Naive thymus-derived CD4-positive, alpha-beta T cell (primary cell): ENCODE measurements at regions of chr12 and their contacts with region 1.

Region 1: GRCh38 chr12:104286538-104287482 is 16.7 kb upstream of the EID3 start:
- DNase-seq: peak; percentile 72 to 90 (median 87)
- ATAC-seq: peak; percentile 93
- H3K4me3 ChIP-seq: peak overlapping the region; percentile 73
- H3K4me3 Mint-ChIP-seq: peak overlapping the region; percentile 86 to 100 (median 98)
- H3K27ac ChIP-seq: peak overlapping the region; percentile 66
- H3K27ac Mint-ChIP-seq: peak overlapping the region; percentile 85 to 99 (median 94)
- H3K4me1 ChIP-seq: peaks cover 18 to 19% of the 10 kb centered on the region in 2 donors
- H3K4me1 Mint-ChIP-seq: peaks cover 14 to 40% (median 34%) of the 10 kb centered on the region in 7 donors
- H3K27me3 ChIP-seq: no peaks in the 10 kb centered on the region
- H3K27me3 Mint-ChIP-seq: peaks cover 0 to 1% (median 0%) of the 10 kb centered on the region in 5 donors

Region 2: GRCh38 chr12:103956516-103957027 is 330.2 kb before region 1 on chr12:
- CTCF ChIA-PET with region 1: no interaction called
- POLR2A ChIA-PET with region 1: interaction called, 4 read pairs
- intact Hi-C with region 1: loop called in 1 of 2 experiments (anchors 1 kb)
- DNase-seq: peak in 3 of 9 donors; percentile 4 to 7 (median 5)
- ATAC-seq: no peak
- H3K4me3 ChIP-seq: peak overlapping the region; percentile 91
- H3K4me3 Mint-ChIP-seq: peak overlapping the region; percentile 95 to 100 (median 99)
- H3K27ac ChIP-seq: peak overlapping the region; percentile 73
- H3K27ac Mint-ChIP-seq: peak overlapping the region; percentile 93 to 99 (median 98)
- H3K4me1 ChIP-seq: peaks cover 13 to 17% of the 10 kb centered on the region in 2 donors
- H3K4me1 Mint-ChIP-seq: peaks cover 25 to 58% (median 43%) of the 10 kb centered on the region in 7 donors
- H3K27me3 ChIP-seq: no peaks in the 10 kb centered on the region
- H3K27me3 Mint-ChIP-seq: no peaks in the 10 kb centered on the region

Region 3: GRCh38 chr12:104137913-104138796 is 148.7 kb before region 1 on chr12 and contains the start of gene NFYB:
- CTCF ChIA-PET with region 1: interaction called, 5 read pairs
- POLR2A ChIA-PET with region 1: interaction called, 7 read pairs
- intact Hi-C with region 1: loop called (anchors 1 to 2 kb)
- DNase-seq: peak; percentile 90 to 96 (median 94)
- ATAC-seq: peak; percentile 97
- H3K4me3 ChIP-seq: peak within 1 kb of the TSS; percentile 69
- H3K4me3 Mint-ChIP-seq: peak within 1 kb of the TSS; percentile 81 to 93 (median 90)
- H3K27ac ChIP-seq: peak within 1 kb of the TSS; percentile 72
- H3K27ac Mint-ChIP-seq: peak within 1 kb of the TSS; percentile 71 to 95 (median 89)
- H3K4me1 ChIP-seq: peaks cover 10 to 23% of the 10 kb centered on the region in 2 donors
- H3K4me1 Mint-ChIP-seq: peaks cover 0 to 22% (median 9%) of the 10 kb centered on the region in 7 donors
- H3K27me3 ChIP-seq: no peaks in the 10 kb centered on the region
- H3K27me3 Mint-ChIP-seq: peaks cover 0 to 24% (median 0%) of the 10 kb centered on the region in 5 donors
- total RNA-seq, gene NFYB: 11.6 to 25.9 (median 24.4) TPM

Region 4: DNA sequence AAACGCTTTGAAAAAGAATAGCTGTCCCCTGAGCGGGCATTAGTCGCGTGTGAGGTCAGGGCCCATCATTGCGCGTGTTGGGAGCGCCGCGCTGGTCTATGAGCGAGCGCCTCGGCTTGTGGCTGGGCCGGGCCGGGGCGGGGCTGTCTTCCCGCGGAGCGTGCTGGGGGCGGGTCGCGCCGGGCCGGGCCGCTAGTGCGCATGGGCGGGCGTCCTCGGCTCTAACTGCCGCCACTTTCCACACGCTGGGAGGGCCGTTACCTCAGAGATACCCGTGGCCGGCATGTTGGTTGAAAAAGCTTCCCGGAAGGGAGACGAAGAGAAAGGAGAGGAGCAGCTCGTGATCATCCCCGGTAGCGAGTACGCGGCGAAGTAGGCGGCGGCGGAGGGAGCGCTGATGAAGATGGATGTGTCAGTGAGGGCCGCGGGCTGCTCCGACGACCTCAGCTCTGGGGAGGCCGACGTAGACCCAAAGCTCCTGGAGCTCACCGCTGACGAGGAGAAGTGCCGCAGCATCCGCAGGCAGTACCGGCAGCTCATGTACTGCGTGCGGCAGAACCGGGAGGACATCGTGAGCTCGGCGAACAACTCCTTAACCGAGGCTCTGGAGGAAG is 16.8 kb after region 1 on chr12 and contains the start of gene EID3:
- CTCF ChIA-PET with region 1: interaction called, 14 read pairs
- POLR2A ChIA-PET with region 1: interaction called, 66 read pairs
- intact Hi-C with region 1: loop called (anchors 1 kb)
- DNase-seq: peak; percentile 86 to 96 (median 91)
- ATAC-seq: peak; percentile 99
- H3K4me3 ChIP-seq: peak within 1 kb of the TSS; percentile 56
- H3K4me3 Mint-ChIP-seq: peak within 1 kb of the TSS; percentile 87 to 99 (median 96)
- H3K27ac ChIP-seq: peak within 1 kb of the TSS; percentile 84
- H3K27ac Mint-ChIP-seq: peak within 1 kb of the TSS; percentile 91 to 99 (median 97)
- H3K4me1 ChIP-seq: peaks cover 7 to 24% of the 10 kb centered on the region in 2 donors
- H3K4me1 Mint-ChIP-seq: peaks cover 35 to 72% (median 56%) of the 10 kb centered on the region in 7 donors
- H3K27me3 ChIP-seq: no peaks in the 10 kb centered on the region
- H3K27me3 Mint-ChIP-seq: no peaks in the 10 kb centered on the region
- total RNA-seq, gene EID3: 8.2 to 11.8 (median 10.4) TPM

Region 5: GRCh38 chr12:104358347-104359003 is 71.7 kb after region 1 on chr12:
- CTCF ChIA-PET with region 1: no interaction called
- POLR2A ChIA-PET with region 1: interaction called, 3 read pairs
- intact Hi-C with region 1: loop called (anchors 1 to 5 kb)
- DNase-seq: peak; percentile 33 to 73 (median 63)
- ATAC-seq: peak; percentile 97
- H3K4me3 ChIP-seq: no peak overlapping the region
- H3K4me3 Mint-ChIP-seq: no peak overlapping the region
- H3K27ac ChIP-seq: no peak overlapping the region
- H3K27ac Mint-ChIP-seq: no peak overlapping the region
- H3K4me1 ChIP-seq: no peaks in the 10 kb centered on the region
- H3K4me1 Mint-ChIP-seq: peaks cover 0 to 13% (median 0%) of the 10 kb centered on the region in 7 donors
- H3K27me3 ChIP-seq: no peaks in the 10 kb centered on the region
- H3K27me3 Mint-ChIP-seq: no peaks in the 10 kb centered on the region

Region 6: GRCh38 chr12:104958009-104958945 is 671.5 kb after region 1 on chr12 and contains the start of gene SLC41A2:
- CTCF ChIA-PET with region 1: no interaction called
- POLR2A ChIA-PET with region 1: no interaction called
- intact Hi-C with region 1: loop called (anchors 5 kb)
- DNase-seq: peak; percentile 55 to 87 (median 74)
- ATAC-seq: peak; percentile 93
- H3K4me3 ChIP-seq: peak within 1 kb of the TSS; percentile 77
- H3K4me3 Mint-ChIP-seq: peak within 1 kb of the TSS; percentile 91 to 98 (median 96)
- H3K27ac ChIP-seq: peak within 1 kb of the TSS; percentile 59
- H3K27ac Mint-ChIP-seq: peak within 1 kb of the TSS; percentile 65 to 93 (median 89)
- H3K4me1 ChIP-seq: peaks cover 6 to 9% of the 10 kb centered on the region in 2 donors
- H3K4me1 Mint-ChIP-seq: peaks cover 8 to 29% (median 26%) of the 10 kb centered on the region in 7 donors
- H3K27me3 ChIP-seq: peaks cover 0 to 3% of the 10 kb centered on the region in 2 donors
- H3K27me3 Mint-ChIP-seq: peaks cover 5 to 49% (median 7%) of the 10 kb centered on the region in 5 donors
- total RNA-seq, gene SLC41A2: 2.0 to 12.7 (median 2.6) TPM

Region 7: GRCh38 chr12:105330283-105330930 is 1043.6 kb after region 1 on chr12 and contains the start of gene C12orf75:
- CTCF ChIA-PET with region 1: no interaction called
- POLR2A ChIA-PET with region 1: no interaction called
- intact Hi-C with region 1: loop called (anchors 2 kb)
- DNase-seq: peak; percentile 62 to 94 (median 72)
- ATAC-seq: peak; percentile 91
- H3K4me3 ChIP-seq: peak within 1 kb of the TSS; percentile 56
- H3K4me3 Mint-ChIP-seq: peak within 1 kb of the TSS; percentile 82 to 94 (median 90)
- H3K27ac ChIP-seq: peak within 1 kb of the TSS; percentile 64
- H3K27ac Mint-ChIP-seq: peak within 1 kb of the TSS; percentile 65 to 95 (median 86)
- H3K4me1 ChIP-seq: peaks cover 12 to 57% of the 10 kb centered on the region in 2 donors
- H3K4me1 Mint-ChIP-seq: peaks cover 16 to 74% (median 24%) of the 10 kb centered on the region in 7 donors
- H3K27me3 ChIP-seq: no peaks in the 10 kb centered on the region
- H3K27me3 Mint-ChIP-seq: no peaks in the 10 kb centered on the region
- total RNA-seq, gene C12orf75: 5.5 to 146 (median 13.0) TPM